ENCODE measurements at regions of chr7 and their contacts with region 1.

Region 1: GRCh38 chr7:49852619-49853462 is 79.4 kb downstream of the VWC2 start:
- DNase-seq: peak; percentile 60
- H3K27ac ChIP-seq: no peak overlapping the region
- CTCF ChIP-seq: peak; percentile 81

Region 2: GRCh38 chr7:49159536-49159935 is 693.3 kb before region 1 on chr7:
- CTCF ChIA-PET with region 1: interaction called, 10 read pairs
- POLR2A ChIA-PET with region 1: no interaction called
- DNase-seq: no peak
- H3K27ac ChIP-seq: no peak overlapping the region
- CTCF ChIP-seq: no peak